PC-9 (cell line): ENCODE measurements at regions of chr7 and their contacts with region 1.

Region 1: DNA sequence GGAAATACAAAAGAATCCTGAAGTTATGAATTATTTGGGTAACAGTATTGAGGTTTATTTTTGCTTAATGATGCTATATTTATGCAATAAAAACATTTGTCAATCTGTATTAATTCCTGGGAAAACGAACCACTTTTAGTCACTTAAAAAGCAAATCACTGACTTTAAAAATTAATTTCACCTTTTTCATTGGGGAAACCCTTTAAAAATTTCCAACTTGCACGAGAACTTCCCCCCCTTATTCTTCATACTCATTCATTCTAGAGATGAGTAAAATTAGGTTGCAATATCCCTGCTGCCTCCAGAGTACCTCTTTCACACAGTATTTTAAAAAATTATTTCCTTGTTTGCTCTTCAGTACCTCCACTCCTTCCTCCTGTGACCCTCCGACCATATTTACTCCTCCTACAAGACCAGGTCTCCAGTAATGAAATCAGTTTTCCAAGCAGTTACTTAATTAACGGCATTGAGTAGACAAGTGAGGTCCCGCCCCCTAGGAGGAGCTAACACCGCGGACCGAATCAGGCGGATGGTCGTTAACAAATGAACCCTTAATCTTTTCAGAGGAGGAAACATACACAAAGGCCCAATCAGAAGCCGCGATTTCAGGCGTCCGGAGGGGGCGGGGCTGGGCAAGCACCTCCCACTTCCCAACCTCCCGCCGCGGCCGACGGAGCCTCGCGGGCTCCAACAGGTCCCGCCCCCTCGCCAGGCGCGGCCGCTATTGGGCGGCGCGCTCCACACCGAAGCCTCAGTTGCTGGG is 465 bp upstream of the TRIM24 start:
- DNase-seq: peak; percentile 94 to 99
- H3K4me3 ChIP-seq: peak overlapping the region; percentile 53
- H3K27ac ChIP-seq: no peak overlapping the region
- H3K4me1 ChIP-seq: peaks cover 6% of the 10 kb centered on the region
- H3K27me3 ChIP-seq: no peaks in the 10 kb centered on the region
- CTCF ChIP-seq: peak; percentile 62

Region 2: GRCh38 chr7:138144958-138145357 is 314.6 kb before region 1 on chr7:
- CTCF ChIA-PET with region 1: no interaction called
- POLR2A ChIA-PET with region 1: no interaction called
- intact Hi-C with region 1: no loop called
- DNase-seq: no peak
- H3K4me3 ChIP-seq: no peak overlapping the region
- H3K27ac ChIP-seq: no peak overlapping the region
- H3K4me1 ChIP-seq: no peaks in the 10 kb centered on the region
- H3K27me3 ChIP-seq: no peaks in the 10 kb centered on the region
- CTCF ChIP-seq: no peak

Region 3: DNA sequence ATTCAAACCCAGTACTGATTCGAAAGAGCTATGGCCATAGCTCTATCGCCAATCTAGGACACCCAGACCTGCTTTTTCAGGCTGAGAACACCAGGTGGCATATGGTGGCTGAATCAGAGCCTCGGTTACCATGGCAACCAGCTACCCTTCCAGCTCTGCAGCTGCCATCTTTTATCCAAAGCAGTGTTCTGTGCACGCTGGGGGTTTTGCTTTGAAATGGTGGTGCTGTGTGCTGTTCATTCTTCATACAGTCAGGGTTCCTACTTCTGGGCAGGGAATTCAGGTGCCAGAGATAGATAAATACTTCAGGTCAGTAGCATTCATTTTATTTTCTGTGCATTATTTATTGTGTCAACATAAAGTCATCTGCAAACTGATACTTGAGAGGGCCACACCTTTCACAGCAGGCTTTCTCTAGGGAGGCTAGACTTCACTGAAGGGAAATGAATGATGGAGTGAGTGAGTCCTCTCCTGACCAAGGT is 298.0 kb before region 1 on chr7:
- CTCF ChIA-PET with region 1: interaction called, 6 read pairs
- POLR2A ChIA-PET with region 1: no interaction called
- intact Hi-C with region 1: loop called (anchors 2 kb)
- DNase-seq: peak; percentile 78 to 81
- H3K4me3 ChIP-seq: no peak overlapping the region
- H3K27ac ChIP-seq: no peak overlapping the region
- H3K4me1 ChIP-seq: 0 out of 2 replicates have a peak, but pooled peaks cover 9% of the 10 kb centered on the region
- H3K27me3 ChIP-seq: no peaks in the 10 kb centered on the region
- CTCF ChIP-seq: peak; percentile 89

Region 4: GRCh38 chr7:138169441-138169851 is 290.1 kb before region 1 on chr7:
- CTCF ChIA-PET with region 1: no interaction called
- POLR2A ChIA-PET with region 1: interaction called, 7 read pairs
- intact Hi-C with region 1: loop called (anchors 2 kb)
- DNase-seq: peak in 1 of 2 experiments; percentile 10
- H3K4me3 ChIP-seq: no peak overlapping the region
- H3K27ac ChIP-seq: no peak overlapping the region
- H3K4me1 ChIP-seq: no peaks in the 10 kb centered on the region
- H3K27me3 ChIP-seq: no peaks in the 10 kb centered on the region
- CTCF ChIP-seq: no peak

Region 5: DNA sequence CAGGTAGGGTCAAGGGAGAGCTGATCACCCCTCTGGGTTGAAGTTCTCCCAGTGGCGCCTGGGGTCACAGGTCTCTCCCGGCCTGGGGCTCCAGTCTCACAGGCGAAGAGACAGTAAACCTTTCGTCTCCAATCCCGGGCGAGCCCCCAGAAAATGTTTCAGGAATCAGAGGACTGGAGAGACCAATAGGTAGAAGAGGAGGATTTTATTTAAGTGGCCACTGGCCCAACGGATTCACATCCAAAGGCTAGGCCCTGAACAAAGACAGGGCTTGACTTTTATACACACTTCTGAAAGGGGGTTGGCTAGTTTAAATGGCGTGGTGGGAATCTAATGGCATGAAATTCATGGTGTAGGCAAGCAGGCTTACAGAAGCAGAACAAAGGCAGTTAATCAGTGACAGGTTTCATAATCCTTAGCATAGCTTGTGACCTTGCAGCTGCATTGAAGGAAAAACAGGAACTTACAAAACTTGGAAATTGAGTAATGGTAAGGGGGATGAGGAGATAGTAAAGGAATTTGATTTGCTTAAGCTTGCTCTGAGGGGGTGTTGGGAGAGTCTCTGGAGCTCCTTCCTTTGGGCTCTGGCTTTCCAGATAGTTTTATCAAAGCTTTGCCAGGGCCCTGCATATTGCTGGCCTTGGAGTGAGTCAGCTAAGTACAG is 106.0 kb after region 1 on chr7:
- CTCF ChIA-PET with region 1: no interaction called
- POLR2A ChIA-PET with region 1: no interaction called
- intact Hi-C with region 1: loop called (anchors 2 kb)
- DNase-seq: peak in 1 of 2 experiments; percentile 43
- H3K4me3 ChIP-seq: 0 out of 2 replicates have a peak overlapping the region, but pooled peaks have one; percentile 18
- H3K27ac ChIP-seq: no peak overlapping the region
- H3K4me1 ChIP-seq: peaks cover 18% of the 10 kb centered on the region
- H3K27me3 ChIP-seq: no peaks in the 10 kb centered on the region
- CTCF ChIP-seq: no peak

Region 6: DNA sequence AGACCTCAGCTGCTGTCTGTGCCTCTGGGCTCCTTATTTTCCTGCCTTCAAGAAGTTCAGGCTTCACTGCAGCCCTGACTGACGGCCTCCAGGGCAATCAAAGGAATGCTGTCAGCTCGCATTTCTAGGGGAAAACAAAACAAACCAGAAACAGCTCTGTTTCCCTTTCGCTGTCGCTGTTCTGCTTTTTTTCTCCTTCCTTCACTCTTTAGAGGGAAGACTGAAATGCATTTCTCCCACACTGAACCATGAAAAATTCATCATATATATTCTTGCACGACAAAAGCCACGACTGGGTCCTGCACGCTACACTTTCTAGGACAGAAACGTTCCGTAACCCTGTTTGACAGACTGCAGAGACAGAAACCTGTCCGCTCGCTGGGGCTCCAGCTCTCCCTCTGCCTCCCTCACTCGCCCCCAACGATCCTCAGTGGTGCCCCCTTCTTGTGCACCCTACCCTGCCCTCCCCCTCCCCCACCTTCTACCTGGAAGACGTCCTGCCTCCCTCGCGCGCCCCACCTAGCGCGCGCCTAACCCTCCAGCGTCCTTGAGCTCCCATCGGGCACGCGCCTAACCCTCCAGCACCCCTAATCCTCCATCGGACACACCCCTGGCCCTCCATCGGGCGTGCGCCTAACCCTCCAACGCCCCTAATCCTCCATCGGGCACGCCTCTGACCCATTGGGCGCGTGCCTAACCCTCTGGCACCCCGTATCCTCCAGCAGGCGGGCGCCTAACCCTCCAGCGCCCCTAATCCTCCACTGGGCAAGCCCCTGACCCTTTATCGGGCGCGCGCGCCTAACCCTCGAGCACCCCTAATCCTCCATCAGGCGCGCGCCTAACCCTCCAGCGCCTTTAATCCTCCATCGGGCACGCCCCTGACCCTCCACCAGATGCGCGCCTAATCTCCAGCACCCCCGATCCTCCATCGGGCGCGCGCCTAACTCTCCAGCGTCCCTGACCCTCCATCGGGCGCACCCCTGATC is 204.4 kb after region 1 on chr7:
- CTCF ChIA-PET with region 1: no interaction called
- POLR2A ChIA-PET with region 1: no interaction called
- intact Hi-C with region 1: loop called (anchors 5 kb)
- DNase-seq: peak; percentile 69 to 90
- H3K4me3 ChIP-seq: peak overlapping the region; percentile 53
- H3K27ac ChIP-seq: peak overlapping the region; percentile 64
- H3K4me1 ChIP-seq: peaks cover 32% of the 10 kb centered on the region
- H3K27me3 ChIP-seq: no peaks in the 10 kb centered on the region
- CTCF ChIP-seq: no peak

Region 7: DNA sequence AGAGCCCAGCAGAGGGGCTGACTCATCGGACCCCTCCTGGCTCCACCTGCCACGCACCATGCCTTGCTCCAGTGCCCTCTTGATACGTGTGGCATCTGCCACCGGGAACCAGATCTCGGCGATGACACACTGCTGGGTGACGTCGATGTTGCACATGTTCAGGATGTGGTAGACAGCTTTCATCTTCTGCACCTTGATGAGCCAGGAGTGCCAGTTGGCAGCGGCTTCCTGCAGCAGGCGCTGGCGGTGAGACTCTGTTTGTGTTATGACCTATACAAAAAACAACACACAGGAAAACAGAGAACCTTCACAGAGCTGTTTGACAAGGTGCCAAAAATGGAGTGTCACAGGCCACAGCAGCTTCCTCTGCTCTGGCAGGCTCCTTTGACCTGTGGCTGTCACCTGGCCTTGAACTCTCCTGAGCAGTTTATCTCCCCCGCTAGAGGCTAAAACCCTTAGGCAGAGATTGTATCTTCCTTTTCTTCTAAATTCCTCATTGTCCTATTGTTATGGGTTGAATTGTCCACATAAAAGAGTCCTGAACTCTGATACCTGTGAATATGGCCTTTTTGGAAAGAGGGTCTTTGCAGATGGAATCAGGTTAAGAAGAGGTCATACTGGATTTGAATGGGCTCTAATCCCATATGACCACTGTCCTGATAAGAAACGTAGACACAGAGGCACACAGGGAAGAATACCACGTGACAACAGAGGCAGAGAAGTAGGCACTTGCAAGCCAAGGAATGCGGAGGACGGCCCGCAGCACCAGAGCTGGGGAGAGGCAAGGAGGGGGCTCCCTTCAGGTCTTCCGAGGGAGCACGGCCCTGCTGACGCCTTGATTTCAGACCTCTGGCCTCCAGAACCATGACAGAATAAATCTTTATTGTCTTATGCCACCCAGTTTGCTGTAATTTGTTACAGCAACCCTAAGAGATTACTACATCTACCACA is 293.2 kb after region 1 on chr7:
- CTCF ChIA-PET with region 1: no interaction called
- POLR2A ChIA-PET with region 1: no interaction called
- intact Hi-C with region 1: loop called (anchors 2 kb)
- DNase-seq: peak; percentile 97 to 100
- H3K4me3 ChIP-seq: no peak overlapping the region
- H3K27ac ChIP-seq: peak overlapping the region; percentile 95
- H3K4me1 ChIP-seq: peaks cover 73% of the 10 kb centered on the region
- H3K27me3 ChIP-seq: no peaks in the 10 kb centered on the region
- CTCF ChIP-seq: no peak